ENCODE measurements at regions of chr3 and their contacts with region 1.

Region 1: GRCh38 chr3:194592798-194593752 is 40.1 kb downstream of the TMEM44 start:
- DNase-seq: peak; percentile 76 to 91
- ATAC-seq: peak; percentile 85
- H3K4me3 ChIP-seq: no peak overlapping the region
- H3K27ac ChIP-seq: peak overlapping the region; percentile 91 to 96
- H3K4me1 ChIP-seq: peaks cover 42% of the 10 kb centered on the region
- CTCF ChIP-seq: no peak
- EP300 ChIP-seq: peak; percentile 90 to 91; a peak in 4 of 5 replicates
- POLR2A ChIP-seq: no peak
- RAD21 ChIP-seq: peak; percentile 7 to 33; a peak in 3 of 5 replicates

Region 2: DNA sequence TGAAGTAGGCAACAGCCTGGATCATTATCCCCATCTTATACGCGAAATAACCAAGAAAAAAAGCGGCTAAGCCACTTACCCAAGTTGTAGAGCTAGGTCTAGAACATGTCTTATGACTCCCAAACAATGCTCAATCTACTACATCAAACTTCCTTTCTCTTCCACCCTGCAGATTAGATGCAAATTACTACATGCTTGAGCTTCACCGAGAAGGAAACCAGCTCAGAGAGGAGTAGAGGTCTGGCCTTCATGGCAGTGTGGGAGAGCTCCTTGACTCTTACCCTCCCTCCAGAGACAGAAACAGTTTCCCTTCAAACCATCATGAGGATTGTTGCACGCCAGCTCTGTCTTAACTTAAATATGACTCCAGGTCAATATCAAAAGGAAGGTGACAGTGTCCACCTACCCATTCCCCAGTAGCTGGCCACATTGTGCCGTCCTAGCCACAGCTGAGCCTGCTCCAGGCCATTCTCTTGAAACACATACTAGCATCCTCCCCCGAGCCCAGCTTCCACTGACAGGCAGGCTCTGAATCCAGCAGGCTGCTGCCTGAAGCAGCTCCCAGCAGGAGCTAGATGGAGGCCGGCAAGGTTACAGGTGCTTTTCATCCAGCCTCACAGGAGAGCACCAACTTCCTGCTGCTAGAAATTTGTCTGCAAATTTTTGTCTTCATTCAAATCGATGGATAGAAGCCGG is 298.7 kb before region 1 on chr3:
- CTCF ChIA-PET with region 1: no interaction called
- POLR2A ChIA-PET with region 1: no interaction called
- DNase-seq: no peak
- ATAC-seq: no peak
- H3K4me3 ChIP-seq: no peak overlapping the region
- H3K27ac ChIP-seq: peak overlapping the region in 1 of 2 experiments; percentile 57; a peak in 4 of 6 replicates
- H3K4me1 ChIP-seq: peaks cover 17% of the 10 kb centered on the region
- CTCF ChIP-seq: no peak
- EP300 ChIP-seq: no peak
- POLR2A ChIP-seq: no peak
- RAD21 ChIP-seq: no peak

Region 3: DNA sequence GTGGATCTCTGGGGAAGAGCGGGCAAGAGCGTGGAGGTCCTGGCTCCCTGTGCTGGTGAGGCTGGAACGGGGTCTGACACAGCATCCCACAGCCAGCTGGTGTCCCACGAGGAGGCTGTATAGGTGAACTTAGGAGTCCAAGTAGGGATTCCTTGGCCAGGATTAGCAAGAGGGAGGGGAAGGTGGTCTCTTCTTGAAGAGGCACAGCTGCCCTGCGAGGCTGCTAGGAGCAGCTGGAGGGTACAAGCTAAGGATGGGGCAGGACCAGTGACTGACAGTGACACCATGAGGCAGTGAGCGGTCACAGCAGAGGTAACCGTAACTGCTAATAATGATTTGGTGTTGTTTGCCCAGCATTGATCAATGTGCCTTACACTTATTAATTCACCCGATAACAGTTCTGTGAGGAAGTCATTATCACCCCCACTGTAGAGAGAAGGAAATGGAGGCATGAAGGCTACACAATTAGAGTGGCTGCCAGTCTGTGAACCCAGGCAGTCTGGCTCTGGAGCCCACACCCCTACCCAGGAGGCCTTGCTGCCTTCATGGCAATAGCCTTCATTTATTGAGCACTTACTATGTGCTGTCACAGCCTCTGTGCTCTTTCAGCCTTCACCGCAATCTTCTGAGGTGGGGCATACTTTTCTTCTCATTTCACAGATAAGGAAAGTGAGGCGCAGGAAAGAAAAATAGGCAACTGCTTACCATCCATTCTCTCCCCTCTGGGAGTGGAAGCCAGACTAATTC is 19.2 kb before region 1 on chr3:
- CTCF ChIA-PET with region 1: interaction called, 30 read pairs
- POLR2A ChIA-PET with region 1: interaction called, 3 read pairs
- DNase-seq: peak; percentile 31 to 39
- ATAC-seq: peak; percentile 47 to 63; a peak in 4 of 6 replicates
- H3K4me3 ChIP-seq: no peak overlapping the region
- H3K27ac ChIP-seq: peak overlapping the region; percentile 60 to 83; a peak in 4 of 6 replicates
- H3K4me1 ChIP-seq: peaks cover 57% of the 10 kb centered on the region
- CTCF ChIP-seq: peak; percentile 38; the same call in 2 of the 3 replicates
- EP300 ChIP-seq: no peak
- POLR2A ChIP-seq: no peak
- RAD21 ChIP-seq: peak; percentile 47 to 64; a peak in 4 of 5 replicates

Region 4: GRCh38 chr3:194841066-194841841 is 248.2 kb after region 1 on chr3:
- CTCF ChIA-PET with region 1: no interaction called
- POLR2A ChIA-PET with region 1: no interaction called
- DNase-seq: peak; percentile 25 to 29
- ATAC-seq: peak; percentile 62 to 77; a peak in 4 of 6 replicates
- H3K4me3 ChIP-seq: no peak overlapping the region
- H3K27ac ChIP-seq: no peak overlapping the region; a peak in 1 of 6 replicates
- H3K4me1 ChIP-seq: 0 out of 3 replicates have a peak, but pooled peaks cover 4% of the 10 kb centered on the region
- CTCF ChIP-seq: no peak
- EP300 ChIP-seq: no peak
- POLR2A ChIP-seq: no peak
- RAD21 ChIP-seq: no peak